ENCODE measurements at regions of chr5 and their contacts with region 1.

Region 1: GRCh38 chr5:94777056-94777880 is 158.8 kb downstream of the SLF1 start:
- DNase-seq: no peak
- ATAC-seq: no peak
- H3K4me3 ChIP-seq: no peak overlapping the region
- H3K27ac ChIP-seq: no peak overlapping the region
- H3K4me1 ChIP-seq: no peaks in the 10 kb centered on the region
- H3K27me3 ChIP-seq: peaks cover 0 to 5% (median 0%) of the 10 kb centered on the region in 7 donors
- CTCF ChIP-seq: no peak

Region 2: GRCh38 chr5:94788527-94788926 is 11.3 kb after region 1 on chr5:
- intact Hi-C with region 1: loop called in 1 of 10 experiments (anchors 1 kb)
- DNase-seq: no peak
- ATAC-seq: no peak
- H3K4me3 ChIP-seq: no peak overlapping the region
- H3K27ac ChIP-seq: no peak overlapping the region
- H3K4me1 ChIP-seq: peaks cover 0 to under 1% (median 0%) of the 10 kb centered on the region in 9 donors
- H3K27me3 ChIP-seq: no peaks in the 10 kb centered on the region
- CTCF ChIP-seq: no peak

Region 3: GRCh38 chr5:94872526-94872925 is 95.3 kb after region 1 on chr5:
- intact Hi-C with region 1: no loop called
- DNase-seq: no peak
- ATAC-seq: no peak
- H3K4me3 ChIP-seq: no peak overlapping the region
- H3K27ac ChIP-seq: no peak overlapping the region
- H3K4me1 ChIP-seq: no peaks in the 10 kb centered on the region
- H3K27me3 ChIP-seq: no peaks in the 10 kb centered on the region
- CTCF ChIP-seq: no peak